ENCODE measurements at regions of chr13 and their contacts with region 1.

Region 1: DNA sequence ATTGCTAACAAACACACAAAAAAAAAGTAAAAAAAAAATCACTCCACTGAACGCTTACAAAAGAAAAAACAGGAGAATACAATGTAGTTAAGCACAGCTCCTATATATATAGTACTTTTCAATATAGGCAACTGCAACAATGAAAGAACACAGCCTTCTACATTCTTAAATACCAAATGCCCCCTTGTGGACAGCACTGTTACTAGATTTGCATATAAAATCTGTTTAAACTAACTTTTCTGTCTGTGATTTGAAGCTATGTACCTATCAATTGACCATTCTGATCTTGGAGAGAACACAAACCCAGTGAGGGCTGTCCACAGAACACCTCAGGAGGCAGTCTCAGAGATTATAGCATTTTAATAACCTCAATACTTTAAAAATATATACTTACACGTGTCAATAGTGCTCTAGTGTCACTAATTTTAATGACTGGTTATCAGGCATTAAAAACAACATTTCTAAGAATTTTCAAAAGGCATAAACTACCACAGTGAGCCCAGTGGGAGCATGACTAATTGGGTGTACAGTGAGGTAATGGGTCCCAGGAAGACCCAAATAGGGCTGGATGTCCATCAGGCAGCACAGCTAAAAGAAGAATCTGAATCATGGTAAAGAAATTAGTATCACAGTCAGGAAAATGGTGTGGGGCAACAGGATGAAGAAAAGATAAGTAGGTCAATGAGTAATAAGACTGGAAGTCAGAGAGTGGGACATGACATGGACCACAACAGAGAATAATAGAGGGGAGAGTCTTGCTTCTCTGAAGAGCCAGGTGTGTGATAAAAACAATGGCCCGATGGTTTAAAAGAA is 22.2 kb downstream of the CCDC169 start:
- DNase-seq: no peak
- ATAC-seq: peak; percentile 50

Region 2: GRCh38 chr13:35978603-35979316 is 296.6 kb before region 1 on chr13:
- intact Hi-C with region 1: loop called (anchors 2 kb)
- DNase-seq: no peak
- ATAC-seq: peak; percentile 59

Region 3: DNA sequence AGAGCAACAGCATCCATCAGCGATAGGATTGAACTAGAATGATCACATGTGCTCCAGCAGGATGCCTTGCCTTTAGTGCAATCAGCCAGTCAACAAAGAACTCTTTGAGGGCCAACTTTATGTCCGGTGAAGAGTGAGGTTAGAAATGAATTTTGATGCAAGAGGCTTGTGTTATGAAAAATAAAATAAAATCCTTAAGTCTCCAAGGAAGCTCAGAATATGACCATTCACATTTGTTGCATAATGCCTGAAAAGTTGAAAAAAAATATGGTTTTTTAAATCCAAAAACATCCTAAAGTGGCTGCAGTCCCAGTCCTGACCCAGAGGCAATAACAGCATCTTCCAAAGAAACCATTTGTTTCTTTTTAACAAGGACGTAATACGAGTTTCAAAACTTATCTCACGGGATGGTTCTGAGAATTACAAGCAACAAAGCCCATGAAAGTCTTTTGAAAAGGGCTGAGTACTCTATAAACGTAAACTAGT is 205.5 kb before region 1 on chr13:
- intact Hi-C with region 1: no loop called
- DNase-seq: no peak
- ATAC-seq: peak; percentile 86

Region 4: GRCh38 chr13:36493046-36493445 is 217.7 kb after region 1 on chr13:
- intact Hi-C with region 1: no loop called
- DNase-seq: no peak
- ATAC-seq: no peak

Measured in left ventricle myocardium superior (tissue), 1 donor.